ENCODE measurements at regions of chr1 and their contacts with region 1.

Region 1: GRCh38 chr1:91803847-91804545 is 82.0 kb downstream of the TGFBR3 start:
- DNase-seq: peak; percentile 41 to 93 (median 90)
- ATAC-seq: peak; percentile 69
- H3K4me3 ChIP-seq: peak overlapping the region; percentile 48
- H3K4me3 Mint-ChIP-seq: peak overlapping the region; percentile 67 to 90 (median 78)
- H3K27ac ChIP-seq: peak overlapping the region; percentile 99
- H3K27ac Mint-ChIP-seq: peak overlapping the region; percentile 96 to 100 (median 98)
- H3K4me1 ChIP-seq: peaks cover 27 to 33% of the 10 kb centered on the region in 2 donors
- H3K4me1 Mint-ChIP-seq: peaks cover 34 to 71% (median 49%) of the 10 kb centered on the region in 7 donors
- H3K27me3 ChIP-seq: no peaks in the 10 kb centered on the region
- H3K27me3 Mint-ChIP-seq: peaks cover 0 to 15% (median 0%) of the 10 kb centered on the region in 5 donors

Region 2: GRCh38 chr1:91555821-91556531 is 248.0 kb before region 1 on chr1:
- CTCF ChIA-PET with region 1: no interaction called
- POLR2A ChIA-PET with region 1: no interaction called
- intact Hi-C with region 1: loop called (anchors 1 kb)
- DNase-seq: peak in 8 of 9 donors; percentile 56 to 86 (median 76)
- ATAC-seq: peak; percentile 93
- H3K4me3 ChIP-seq: no peak overlapping the region
- H3K4me3 Mint-ChIP-seq: peak overlapping the region in 7 of 10 donors; percentile 12 to 63 (median 45)
- H3K27ac ChIP-seq: peak overlapping the region; percentile 29
- H3K27ac Mint-ChIP-seq: peak overlapping the region; percentile 50 to 97 (median 85)
- H3K4me1 ChIP-seq: peaks cover 35 to 94% of the 10 kb centered on the region in 2 donors
- H3K4me1 Mint-ChIP-seq: peaks cover 41 to 92% (median 57%) of the 10 kb centered on the region in 7 donors
- H3K27me3 ChIP-seq: no peaks in the 10 kb centered on the region
- H3K27me3 Mint-ChIP-seq: peaks cover 0 to 3% (median 0%) of the 10 kb centered on the region in 5 donors

Region 3: DNA sequence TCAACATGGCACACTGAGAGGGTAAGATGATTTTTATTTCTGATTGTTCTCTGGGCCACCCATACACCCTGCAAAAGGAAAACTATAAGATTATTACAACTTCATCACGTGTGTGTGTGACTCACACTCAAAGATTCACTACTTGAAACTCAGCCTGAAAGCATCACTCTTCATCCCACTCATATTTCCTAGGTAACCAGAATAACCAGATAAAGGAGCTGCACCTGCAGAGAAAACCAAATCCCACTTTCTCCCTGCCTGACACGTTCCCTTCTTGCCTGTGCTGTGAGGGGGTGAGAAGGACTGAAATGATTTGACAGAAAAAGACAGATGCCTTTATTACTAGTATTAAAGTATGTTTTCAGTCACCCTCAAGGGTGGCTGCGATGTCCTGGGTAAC is 49.6 kb before region 1 on chr1:
- CTCF ChIA-PET with region 1: no interaction called
- POLR2A ChIA-PET with region 1: no interaction called
- intact Hi-C with region 1: loop called in 1 of 2 experiments (anchors 1 kb)
- DNase-seq: peak in 1 of 9 donors; percentile 58
- ATAC-seq: peak; percentile 31
- H3K4me3 ChIP-seq: no peak overlapping the region
- H3K4me3 Mint-ChIP-seq: no peak overlapping the region
- H3K27ac ChIP-seq: no peak overlapping the region
- H3K27ac Mint-ChIP-seq: peak overlapping the region in 2 of 9 donors; percentile 3 to 30
- H3K4me1 ChIP-seq: peaks cover 0 to 22% of the 10 kb centered on the region in 2 donors
- H3K4me1 Mint-ChIP-seq: peaks cover 0 to 27% (median 0%) of the 10 kb centered on the region in 7 donors
- H3K27me3 ChIP-seq: no peaks in the 10 kb centered on the region
- H3K27me3 Mint-ChIP-seq: peaks cover 0 to 2% (median 0%) of the 10 kb centered on the region in 5 donors

Region 4: GRCh38 chr1:92298573-92299476 is 494.8 kb after region 1 on chr1 and contains the starts of genes GLMN and RPAP2:
- CTCF ChIA-PET with region 1: no interaction called
- POLR2A ChIA-PET with region 1: no interaction called
- intact Hi-C with region 1: loop called (anchors 10 kb)
- DNase-seq: peak; percentile 55 to 86 (median 75)
- ATAC-seq: peak; percentile 97
- H3K4me3 ChIP-seq: peak within 1 kb of the TSS; percentile 93
- H3K4me3 Mint-ChIP-seq: peak within 1 kb of the TSS; percentile 93 to 99 (median 97)
- H3K27ac ChIP-seq: peak within 1 kb of the TSS; percentile 98
- H3K27ac Mint-ChIP-seq: peak within 1 kb of the TSS; percentile 91 to 99 (median 97)
- H3K4me1 ChIP-seq: peaks cover 10 to 19% of the 10 kb centered on the region in 2 donors
- H3K4me1 Mint-ChIP-seq: peaks cover 30 to 61% (median 48%) of the 10 kb centered on the region in 7 donors
- H3K27me3 ChIP-seq: no peaks in the 10 kb centered on the region
- H3K27me3 Mint-ChIP-seq: no peaks in the 10 kb centered on the region
- total RNA-seq, gene GLMN: 13.9 to 27.0 (median 14.3) TPM
- total RNA-seq, gene RPAP2: 29.5 to 50.7 (median 42.3) TPM

Region 5: DNA sequence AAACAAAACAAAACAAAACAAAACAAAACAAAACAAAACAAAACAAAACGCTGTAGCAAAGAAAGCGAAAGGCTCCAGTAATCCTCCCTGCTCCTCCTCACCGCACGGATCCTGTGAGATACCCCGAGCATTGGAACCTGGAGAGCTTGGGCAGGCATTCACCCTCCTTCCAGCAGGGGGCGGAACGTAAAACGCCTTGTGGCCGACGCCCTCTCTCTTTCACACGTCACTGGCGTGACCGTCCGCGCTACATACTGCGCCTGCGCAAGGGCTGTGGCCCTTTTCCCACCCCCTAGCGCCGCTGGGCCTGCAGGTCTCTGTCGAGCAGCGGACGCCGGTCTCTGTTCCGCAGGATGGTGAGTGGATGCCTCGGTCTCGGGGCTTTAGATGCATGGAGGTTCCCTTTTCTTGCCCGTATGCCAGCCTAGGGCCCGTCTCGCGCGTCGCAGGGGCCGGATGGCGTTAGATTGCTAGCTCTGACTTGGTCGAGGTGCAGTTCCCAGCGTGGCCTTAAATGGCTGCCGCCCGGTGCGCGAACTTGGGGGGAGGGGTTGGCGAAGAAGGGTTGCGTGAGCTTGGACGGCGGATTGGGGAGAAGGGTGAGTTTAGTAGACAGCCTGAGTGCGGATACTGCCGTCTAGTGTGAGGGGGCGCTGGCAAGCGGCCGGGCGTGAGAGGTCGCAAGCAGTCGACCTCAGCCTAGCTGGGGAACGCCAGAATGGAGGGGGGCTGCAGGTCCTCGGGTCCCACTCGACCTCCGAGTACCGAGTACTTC is 1028.0 kb after region 1 on chr1 and contains the start of gene RPL5:
- CTCF ChIA-PET with region 1: no interaction called
- POLR2A ChIA-PET with region 1: interaction called, 3 read pairs
- intact Hi-C with region 1: loop called in 1 of 2 experiments (anchors 10 kb)
- DNase-seq: peak; percentile 94 to 99 (median 98)
- ATAC-seq: peak; percentile 95
- H3K4me3 ChIP-seq: peak within 1 kb of the TSS; percentile 94
- H3K4me3 Mint-ChIP-seq: peak within 1 kb of the TSS; percentile 94 to 100 (median 98)
- H3K27ac ChIP-seq: peak within 1 kb of the TSS; percentile 94
- H3K27ac Mint-ChIP-seq: peak within 1 kb of the TSS; percentile 98 to 100 (median 99)
- H3K4me1 ChIP-seq: peaks cover 16 to 30% of the 10 kb centered on the region in 2 donors
- H3K4me1 Mint-ChIP-seq: peaks cover 29 to 54% (median 44%) of the 10 kb centered on the region in 7 donors
- H3K27me3 ChIP-seq: no peaks in the 10 kb centered on the region
- H3K27me3 Mint-ChIP-seq: peaks cover 0 to 5% (median 0%) of the 10 kb centered on the region in 5 donors
- total RNA-seq, gene RPL5: 764 to 1,693 (median 1,596) TPM

Measured in naive thymus-derived CD4-positive, alpha-beta T cell (primary cell).